CD4-positive, alpha-beta memory T cell (primary cell): ENCODE measurements at regions of chr2 and their contacts with region 1.

Region 1: GRCh38 chr2:225041851-225042799 is at the start of gene DOCK10:
- DNase-seq: peak; percentile 60 to 75 (median 63)
- H3K4me3 ChIP-seq: peak within 1 kb of the TSS; percentile 32 to 94
- H3K4me3 Mint-ChIP-seq: peak within 1 kb of the TSS; percentile 94 to 100 (median 98)
- H3K27ac ChIP-seq: peak within 1 kb of the TSS; percentile 91
- H3K27ac Mint-ChIP-seq: peak within 1 kb of the TSS; percentile 94 to 99 (median 97)
- H3K4me1 ChIP-seq: peaks cover 52% of the 10 kb centered on the region
- H3K4me1 Mint-ChIP-seq: peaks cover 44 to 62% (median 53%) of the 10 kb centered on the region in 4 donors
- H3K27me3 ChIP-seq: no peaks in the 10 kb centered on the region
- H3K27me3 Mint-ChIP-seq: no peaks in the 10 kb centered on the region
- total RNA-seq, gene DOCK10: 180 to 186 TPM

Region 2: GRCh38 chr2:224816816-224817215 is 225.3 kb before region 1 on chr2:
- CTCF ChIA-PET with region 1: no interaction called
- POLR2A ChIA-PET with region 1: no interaction called
- intact Hi-C with region 1: no loop called
- DNase-seq: no peak
- H3K4me3 ChIP-seq: no peak overlapping the region
- H3K4me3 Mint-ChIP-seq: no peak overlapping the region
- H3K27ac ChIP-seq: no peak overlapping the region
- H3K27ac Mint-ChIP-seq: peak overlapping the region in 2 of 7 donors; percentile 7 to 65
- H3K4me1 ChIP-seq: no peaks in the 10 kb centered on the region
- H3K4me1 Mint-ChIP-seq: peaks cover 0 to 2% (median 0%) of the 10 kb centered on the region in 4 donors
- H3K27me3 ChIP-seq: no peaks in the 10 kb centered on the region
- H3K27me3 Mint-ChIP-seq: no peaks in the 10 kb centered on the region

Region 3: GRCh38 chr2:224946895-224947294 is 95.2 kb before region 1 on chr2:
- CTCF ChIA-PET with region 1: no interaction called
- POLR2A ChIA-PET with region 1: interaction called, 10 read pairs
- intact Hi-C with region 1: loop called (anchors 5 kb)
- DNase-seq: peak; percentile 59 to 75 (median 66)
- H3K4me3 ChIP-seq: peak overlapping the region; percentile 59 to 64
- H3K4me3 Mint-ChIP-seq: peak overlapping the region; percentile 84 to 95 (median 92)
- H3K27ac ChIP-seq: peak overlapping the region; percentile 75
- H3K27ac Mint-ChIP-seq: peak overlapping the region; percentile 89 to 98 (median 94)
- H3K4me1 ChIP-seq: peaks cover 81% of the 10 kb centered on the region
- H3K4me1 Mint-ChIP-seq: peaks cover 55 to 85% (median 72%) of the 10 kb centered on the region in 4 donors
- H3K27me3 ChIP-seq: no peaks in the 10 kb centered on the region
- H3K27me3 Mint-ChIP-seq: no peaks in the 10 kb centered on the region

Region 4: GRCh38 chr2:225025917-225026571 is 16.1 kb before region 1 on chr2:
- CTCF ChIA-PET with region 1: interaction called, 3 read pairs
- POLR2A ChIA-PET with region 1: interaction called, 31 read pairs
- intact Hi-C with region 1: loop called (anchors 1 kb)
- DNase-seq: peak in 3 of 5 donors; percentile 22 to 55 (median 30)
- H3K4me3 ChIP-seq: no peak overlapping the region
- H3K4me3 Mint-ChIP-seq: peak overlapping the region; percentile 32 to 70 (median 39)
- H3K27ac ChIP-seq: no peak overlapping the region
- H3K27ac Mint-ChIP-seq: peak overlapping the region; percentile 13 to 86 (median 53)
- H3K4me1 ChIP-seq: peaks cover 94% of the 10 kb centered on the region
- H3K4me1 Mint-ChIP-seq: peaks cover 59 to 84% (median 73%) of the 10 kb centered on the region in 4 donors
- H3K27me3 ChIP-seq: no peaks in the 10 kb centered on the region
- H3K27me3 Mint-ChIP-seq: no peaks in the 10 kb centered on the region

Region 5: DNA sequence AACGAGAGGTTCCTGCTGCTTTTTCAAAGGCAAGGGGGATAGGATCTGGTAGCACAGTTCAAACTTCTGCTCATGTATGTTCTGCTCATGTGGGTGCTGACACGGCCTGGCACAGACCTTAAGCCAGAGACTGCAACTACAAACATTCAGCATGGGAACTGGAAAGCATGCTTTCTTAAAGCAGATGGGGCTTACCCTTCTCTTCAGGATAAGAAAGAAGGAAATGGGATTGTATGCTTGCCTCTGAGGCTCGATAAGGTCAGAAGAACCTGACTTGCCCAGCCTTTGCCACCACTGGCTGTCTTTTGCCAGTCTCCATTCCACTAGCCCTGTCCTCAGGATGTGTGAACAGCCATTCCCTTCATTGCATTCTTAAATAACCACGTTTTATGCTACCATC is 10.5 kb before region 1 on chr2:
- CTCF ChIA-PET with region 1: interaction called, 3 read pairs
- POLR2A ChIA-PET with region 1: interaction called, 31 read pairs
- intact Hi-C with region 1: loop called (anchors 1 kb)
- DNase-seq: no peak
- H3K4me3 ChIP-seq: no peak overlapping the region
- H3K4me3 Mint-ChIP-seq: peak overlapping the region in 4 of 8 donors; percentile 23 to 53 (median 50)
- H3K27ac ChIP-seq: no peak overlapping the region
- H3K27ac Mint-ChIP-seq: peak overlapping the region in 5 of 7 donors; percentile 32 to 63 (median 60)
- H3K4me1 ChIP-seq: peaks cover 87% of the 10 kb centered on the region
- H3K4me1 Mint-ChIP-seq: peaks cover 64 to 88% (median 77%) of the 10 kb centered on the region in 4 donors
- H3K27me3 ChIP-seq: no peaks in the 10 kb centered on the region
- H3K27me3 Mint-ChIP-seq: no peaks in the 10 kb centered on the region

Region 6: GRCh38 chr2:225052703-225053102 is 10.6 kb after region 1 on chr2:
- CTCF ChIA-PET with region 1: interaction called, 47 read pairs
- POLR2A ChIA-PET with region 1: interaction called, 154 read pairs
- intact Hi-C with region 1: loop called (anchors 1 kb)
- DNase-seq: peak; percentile 50 to 72 (median 58)
- H3K4me3 ChIP-seq: peak overlapping the region in 1 of 2 donors; percentile 26
- H3K4me3 Mint-ChIP-seq: peak overlapping the region in 7 of 8 donors; percentile 54 to 72 (median 62)
- H3K27ac ChIP-seq: peak overlapping the region; percentile 27
- H3K27ac Mint-ChIP-seq: peak overlapping the region; percentile 6 to 82 (median 31)
- H3K4me1 ChIP-seq: peaks cover 68% of the 10 kb centered on the region
- H3K4me1 Mint-ChIP-seq: peaks cover 46 to 72% (median 57%) of the 10 kb centered on the region in 4 donors
- H3K27me3 ChIP-seq: no peaks in the 10 kb centered on the region
- H3K27me3 Mint-ChIP-seq: no peaks in the 10 kb centered on the region

Region 7: DNA sequence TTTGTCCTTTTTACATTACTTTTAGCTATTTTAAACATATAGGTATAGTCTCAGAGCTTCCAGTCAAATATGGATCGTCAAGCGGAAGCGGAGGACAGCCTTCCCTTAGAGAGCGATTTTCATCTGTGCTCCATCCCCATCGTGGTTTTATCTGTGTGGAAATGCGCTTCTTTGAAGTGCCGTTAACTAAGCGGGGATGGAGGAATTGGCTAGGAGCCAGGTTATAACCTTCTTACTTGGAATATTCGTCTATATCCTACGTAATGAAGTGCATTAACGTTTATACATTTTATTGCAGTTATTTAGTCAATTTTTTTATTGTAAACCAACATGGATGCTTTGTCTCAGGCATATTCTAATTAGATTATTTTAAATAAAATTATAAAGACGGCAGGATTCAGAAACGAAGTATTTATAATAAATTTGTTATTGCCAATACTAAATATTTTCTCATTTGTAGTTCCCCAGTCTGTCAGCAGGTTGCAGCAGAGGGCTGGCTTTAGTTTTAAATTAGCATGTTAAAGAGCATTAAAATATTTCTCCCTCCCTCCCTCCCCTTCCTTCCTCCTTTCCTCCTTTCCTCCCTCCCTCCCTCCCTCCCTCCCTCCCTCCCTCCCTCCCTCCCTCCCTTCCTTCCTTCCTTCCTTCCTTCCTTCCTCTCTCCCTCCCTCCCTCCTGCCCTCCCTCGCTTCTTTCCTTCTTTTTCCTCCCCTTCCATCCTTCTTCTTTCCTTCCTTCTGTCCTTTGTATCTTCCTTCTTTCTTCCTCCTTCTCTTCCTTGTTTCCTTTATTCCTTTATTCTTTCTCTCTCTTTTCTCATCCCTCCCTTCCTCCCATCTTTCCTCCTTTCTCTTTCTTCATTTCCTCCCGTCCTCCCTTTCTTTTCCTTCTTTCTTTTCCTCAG is 80.7 kb after region 1 on chr2:
- CTCF ChIA-PET with region 1: no interaction called
- POLR2A ChIA-PET with region 1: no interaction called
- intact Hi-C with region 1: loop called (anchors 5 kb)
- DNase-seq: peak in 4 of 5 donors; percentile 3 to 18 (median 12)
- H3K4me3 ChIP-seq: no peak overlapping the region
- H3K4me3 Mint-ChIP-seq: no peak overlapping the region
- H3K27ac ChIP-seq: no peak overlapping the region
- H3K27ac Mint-ChIP-seq: peak overlapping the region in 2 of 7 donors; percentile 17 to 94
- H3K4me1 ChIP-seq: no peaks in the 10 kb centered on the region
- H3K4me1 Mint-ChIP-seq: peaks cover 0 to 4% (median 3%) of the 10 kb centered on the region in 4 donors
- H3K27me3 ChIP-seq: no peaks in the 10 kb centered on the region
- H3K27me3 Mint-ChIP-seq: peaks cover 0 to 9% of the 10 kb centered on the region in 2 donors